Activated T-helper 1 cell treated with anti-CD3 and anti-CD28 coated beads, Interleukin-12 subunit alpha, Interleukin-12 subunit beta, Interleukin-2, Interleukin-4 antibody, amounts not matched to agents 30 ng/mL and 10 ng/mL and 1 ng/mL, durations not matched to agents 14 hours and 24 hours and 36 hours (primary cell): ENCODE measurements at regions of chr4 and their contacts with region 1.

Region 1: DNA sequence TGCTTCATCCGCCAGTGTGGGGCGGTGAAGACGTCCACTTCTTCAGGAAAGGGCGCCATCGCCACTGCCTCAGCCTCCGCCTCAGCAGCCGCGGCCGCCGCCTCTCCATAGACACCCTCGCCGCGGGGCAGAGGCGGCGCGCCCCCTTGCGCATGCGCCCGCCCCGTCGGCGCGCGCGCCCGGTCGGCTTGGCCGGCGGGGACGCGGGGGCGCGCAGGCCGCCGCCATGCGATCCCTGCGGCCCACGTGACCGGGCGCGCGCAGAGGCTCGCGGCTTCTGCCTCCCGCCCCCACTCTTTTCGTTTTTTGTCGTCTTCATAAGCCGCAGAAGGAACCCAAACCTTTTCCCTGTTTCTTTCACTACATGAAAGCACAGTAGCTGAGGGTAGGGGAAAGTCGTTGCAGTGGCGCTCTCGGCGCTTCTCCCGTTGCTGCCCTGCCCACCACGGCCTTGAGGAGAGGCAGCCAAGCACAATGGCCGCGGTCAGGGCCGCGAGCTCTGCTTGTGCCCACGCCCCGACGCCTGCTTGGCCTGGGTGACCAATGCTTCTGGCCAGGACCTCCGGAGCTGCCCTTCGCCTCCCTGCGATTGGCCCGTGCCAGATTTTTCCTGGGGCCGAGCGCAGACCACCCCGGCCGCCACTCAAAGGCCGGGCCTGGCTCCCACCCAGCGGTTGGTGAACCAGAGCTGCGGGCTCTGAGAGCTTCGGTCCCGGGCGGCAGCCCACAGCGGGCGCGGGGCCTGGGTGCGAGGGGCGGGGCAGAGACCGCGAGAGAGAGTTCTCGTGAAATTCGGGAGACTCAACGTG is at the start of gene FBXL5:
- DNase-seq: peak; percentile 84
- H3K4me3 Mint-ChIP-seq: peak within 1 kb of the TSS; percentile 99
- H3K27ac Mint-ChIP-seq: peak within 1 kb of the TSS; percentile 96
- H3K4me1 Mint-ChIP-seq: peaks cover 61% of the 10 kb centered on the region
- H3K27me3 Mint-ChIP-seq: no peaks in the 10 kb centered on the region
- total RNA-seq, gene FBXL5: 31.3 and 34.7 TPM in 2 replicates

Region 2: GRCh38 chr4:13654158-13654797 is 2001.2 kb before region 1 on chr4:
- intact Hi-C with region 1: loop called (anchors 1 kb)
- DNase-seq: peak; percentile 70
- H3K4me3 Mint-ChIP-seq: peak overlapping the region; percentile 82
- H3K27ac Mint-ChIP-seq: no peak overlapping the region
- H3K4me1 Mint-ChIP-seq: peaks cover 19% of the 10 kb centered on the region
- H3K27me3 Mint-ChIP-seq: peaks cover 16% of the 10 kb centered on the region

Region 3: GRCh38 chr4:14856076-14856933 is 799.1 kb before region 1 on chr4:
- intact Hi-C with region 1: loop called (anchors 5 kb)
- DNase-seq: peak; percentile 61
- H3K4me3 Mint-ChIP-seq: no peak overlapping the region
- H3K27ac Mint-ChIP-seq: peak overlapping the region; percentile 80
- H3K4me1 Mint-ChIP-seq: peaks cover 52% of the 10 kb centered on the region
- H3K27me3 Mint-ChIP-seq: no peaks in the 10 kb centered on the region

Region 4: DNA sequence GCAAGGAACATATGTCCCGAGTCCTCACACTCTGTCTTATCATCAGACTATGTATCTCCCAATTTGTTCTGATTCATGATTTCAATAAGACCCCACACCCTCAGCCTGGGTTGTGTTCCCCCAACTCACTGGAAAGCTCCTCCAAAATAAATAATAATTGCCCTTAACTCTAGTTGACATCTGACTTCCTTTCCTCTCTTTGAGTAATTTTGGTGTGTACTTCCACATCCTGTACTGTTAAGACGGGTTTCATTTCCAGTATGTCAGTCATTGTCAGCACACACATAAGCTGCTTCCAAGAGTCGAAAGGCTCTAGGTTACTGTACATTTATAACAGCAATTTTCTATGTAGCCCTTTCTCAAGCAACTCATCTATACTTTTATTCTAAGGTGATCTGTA is 279.8 kb before region 1 on chr4:
- intact Hi-C with region 1: loop called (anchors 10 kb)
- DNase-seq: no peak
- H3K4me3 Mint-ChIP-seq: no peak overlapping the region
- H3K27ac Mint-ChIP-seq: no peak overlapping the region
- H3K4me1 Mint-ChIP-seq: peaks cover 46% of the 10 kb centered on the region
- H3K27me3 Mint-ChIP-seq: peaks cover 2% of the 10 kb centered on the region

Region 5: DNA sequence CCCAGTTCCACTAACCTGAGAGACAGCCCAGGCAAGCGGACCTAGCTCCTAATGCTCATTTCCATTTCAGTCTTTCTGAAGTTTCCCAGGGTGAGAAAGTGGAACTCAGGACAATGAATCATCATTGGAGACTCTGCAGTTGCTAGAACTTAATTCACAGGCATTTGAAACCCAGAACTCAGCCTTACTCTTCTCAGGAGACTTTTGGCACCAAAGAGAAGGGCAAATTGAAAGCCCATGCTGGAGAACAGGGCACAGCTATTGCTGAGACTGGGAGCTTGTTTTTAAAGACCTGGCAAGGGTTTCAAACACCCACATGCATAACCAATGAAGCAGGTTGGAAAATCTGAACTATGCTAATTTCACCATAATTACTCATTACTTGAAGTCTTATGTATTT is 83.4 kb after region 1 on chr4:
- intact Hi-C with region 1: loop called (anchors 2 kb)
- DNase-seq: no peak
- H3K4me3 Mint-ChIP-seq: peak overlapping the region; percentile 35
- H3K27ac Mint-ChIP-seq: peak overlapping the region; percentile 85
- H3K4me1 Mint-ChIP-seq: peaks cover 51% of the 10 kb centered on the region
- H3K27me3 Mint-ChIP-seq: no peaks in the 10 kb centered on the region

Region 6: GRCh38 chr4:15794905-15795304 is 139.5 kb after region 1 on chr4:
- intact Hi-C with region 1: loop called (anchors 1 kb)
- DNase-seq: no peak
- H3K4me3 Mint-ChIP-seq: peak overlapping the region; percentile 23
- H3K27ac Mint-ChIP-seq: peak overlapping the region; percentile 92
- H3K4me1 Mint-ChIP-seq: peaks cover 73% of the 10 kb centered on the region
- H3K27me3 Mint-ChIP-seq: no peaks in the 10 kb centered on the region

Region 7: GRCh38 chr4:17336524-17336961 is 1681.1 kb after region 1 on chr4:
- intact Hi-C with region 1: loop called (anchors 10 kb)
- DNase-seq: peak; percentile 77
- H3K4me3 Mint-ChIP-seq: peak overlapping the region; percentile 47
- H3K27ac Mint-ChIP-seq: peak overlapping the region; percentile 87
- H3K4me1 Mint-ChIP-seq: peaks cover 43% of the 10 kb centered on the region
- H3K27me3 Mint-ChIP-seq: peaks cover 6% of the 10 kb centered on the region